ENCODE measurements at regions of chr12 and their contacts with region 1.

Region 1: DNA sequence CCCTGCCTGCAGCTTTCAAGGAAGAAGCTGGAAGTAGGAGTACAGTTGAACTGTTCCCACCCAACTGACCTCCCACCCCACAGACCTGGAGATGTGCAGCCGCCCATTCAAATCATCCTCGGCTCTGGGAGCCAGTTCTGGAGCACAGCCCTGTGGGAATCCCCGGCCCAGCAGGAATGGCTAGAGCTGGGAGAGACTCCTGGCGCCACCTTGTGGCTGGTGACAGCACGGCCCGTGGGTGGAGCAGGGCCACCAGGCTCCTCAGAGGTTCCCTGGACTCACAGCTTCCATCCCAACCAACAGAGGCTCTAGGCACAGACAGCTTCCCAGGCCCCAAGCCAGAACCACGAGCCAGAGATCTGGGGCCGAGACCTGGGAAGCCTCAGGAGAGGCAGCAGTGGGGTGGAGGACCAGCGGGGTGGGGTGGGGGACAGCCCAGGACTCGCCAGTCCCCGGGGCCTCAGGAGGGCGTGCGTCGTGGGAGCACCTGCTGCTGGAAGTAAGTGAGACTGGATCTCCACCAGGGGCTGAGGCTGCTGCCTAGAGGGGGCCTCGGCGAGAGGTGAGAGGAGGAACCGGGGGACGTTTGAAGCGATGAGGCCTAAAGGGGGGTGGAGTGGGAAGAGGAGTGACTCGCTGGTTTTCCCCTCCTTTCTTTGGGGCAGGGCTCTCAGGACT is 43.4 kb downstream of the RNF34 start:
- DNase-seq: peak; percentile 94
- ATAC-seq: peak; percentile 91
- H3K4me3 Mint-ChIP-seq: no peak overlapping the region
- H3K27ac Mint-ChIP-seq: peak overlapping the region; percentile 85
- H3K4me1 Mint-ChIP-seq: peaks cover 7% of the 10 kb centered on the region
- H3K27me3 Mint-ChIP-seq: no peaks in the 10 kb centered on the region; the same call in 1 of the 2 replicates
- CTCF ChIP-seq: peak; percentile 83

Region 2: GRCh38 chr12:121423682-121424623 is 19.4 kb before region 1 on chr12:
- CTCF ChIA-PET with region 1: interaction called, 22 read pairs
- POLR2A ChIA-PET with region 1: no interaction called
- DNase-seq: no peak
- ATAC-seq: no peak
- H3K4me3 Mint-ChIP-seq: no peak overlapping the region
- H3K27ac Mint-ChIP-seq: no peak overlapping the region; the same call in 1 of the 2 replicates
- H3K4me1 Mint-ChIP-seq: no peaks in the 10 kb centered on the region
- H3K27me3 Mint-ChIP-seq: no peaks in the 10 kb centered on the region
- CTCF ChIP-seq: no peak

Region 3: DNA sequence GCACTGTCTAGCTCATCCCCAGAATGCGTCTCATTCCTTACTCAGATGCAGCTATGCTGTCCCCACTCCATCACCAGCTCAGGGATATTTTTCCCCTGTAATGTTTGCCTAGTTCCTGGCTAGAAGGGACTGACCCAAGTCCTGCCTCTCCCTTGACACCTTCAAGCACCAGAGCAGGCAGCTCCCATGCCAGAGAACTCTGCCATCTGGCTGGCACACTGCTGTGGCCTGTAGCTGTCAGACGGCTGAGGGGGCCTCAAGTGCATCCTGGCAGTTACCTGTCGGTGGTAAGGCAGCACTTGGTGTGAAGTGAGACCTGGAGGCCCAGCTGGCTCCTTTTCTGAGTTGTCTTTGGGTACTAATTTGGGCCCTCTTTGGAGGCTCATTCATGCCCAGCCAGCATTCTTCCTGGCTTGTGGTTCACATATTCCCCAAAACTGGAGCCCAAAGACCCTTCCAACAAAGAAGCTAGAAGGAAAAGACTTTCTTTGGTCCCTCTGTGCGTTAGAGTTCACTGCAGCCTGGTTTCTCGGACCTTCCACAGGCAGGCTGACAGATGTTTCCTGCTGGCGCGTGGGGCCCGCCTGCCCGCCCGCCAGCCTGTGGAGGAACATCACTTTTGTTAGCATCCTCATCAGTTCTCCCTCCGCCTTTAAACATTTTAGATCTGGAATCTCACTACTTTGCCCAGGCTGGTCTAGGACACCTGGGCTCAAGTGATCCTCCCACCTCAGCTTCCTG is 10.4 kb before region 1 on chr12:
- CTCF ChIA-PET with region 1: interaction called, 16 read pairs
- POLR2A ChIA-PET with region 1: no interaction called
- DNase-seq: no peak
- ATAC-seq: no peak
- H3K4me3 Mint-ChIP-seq: no peak overlapping the region
- H3K27ac Mint-ChIP-seq: no peak overlapping the region
- H3K4me1 Mint-ChIP-seq: no peaks in the 10 kb centered on the region
- H3K27me3 Mint-ChIP-seq: no peaks in the 10 kb centered on the region
- CTCF ChIP-seq: no peak

Region 4: DNA sequence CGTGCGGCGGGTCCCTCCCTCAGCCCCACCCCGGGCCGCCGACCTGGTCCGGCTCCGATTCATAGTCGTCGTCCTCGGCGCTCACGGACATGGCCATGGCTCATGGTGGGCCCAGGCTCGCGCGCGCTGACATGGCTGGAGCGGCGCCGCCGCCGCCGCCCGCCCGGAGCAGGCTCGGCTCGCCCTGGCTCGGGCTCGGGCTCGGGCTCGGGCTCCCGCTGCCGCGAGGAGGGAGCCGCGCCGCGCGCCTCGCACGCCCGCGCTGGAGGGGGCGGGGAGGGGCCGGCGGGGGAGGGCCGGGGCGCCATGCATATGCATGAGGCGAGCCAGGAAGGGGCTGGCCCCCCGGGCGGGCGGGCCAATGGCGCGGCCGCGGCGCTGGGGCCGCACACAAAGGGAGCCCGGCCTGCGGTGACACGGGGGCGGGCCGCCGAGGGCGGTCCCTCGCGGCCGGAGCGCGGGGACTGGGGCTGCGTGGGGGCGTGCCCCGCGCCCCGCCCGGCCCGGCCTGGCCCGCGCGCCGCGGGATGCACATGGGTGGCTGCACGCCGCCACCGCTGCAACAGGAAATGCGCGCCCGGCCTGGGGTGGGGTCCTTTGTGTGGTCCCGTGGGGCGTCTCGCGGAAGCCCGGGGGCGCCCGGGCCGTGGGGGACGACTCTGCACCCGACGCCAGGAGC is 23.9 kb after region 1 on chr12:
- CTCF ChIA-PET with region 1: interaction called, 25 read pairs
- POLR2A ChIA-PET with region 1: no interaction called
- DNase-seq: peak; percentile 89
- ATAC-seq: peak; percentile 83
- H3K4me3 Mint-ChIP-seq: peak overlapping the region; percentile 56
- H3K27ac Mint-ChIP-seq: no peak overlapping the region
- H3K4me1 Mint-ChIP-seq: peaks cover 36% of the 10 kb centered on the region
- H3K27me3 Mint-ChIP-seq: no peaks in the 10 kb centered on the region
- CTCF ChIP-seq: no peak

Region 5: DNA sequence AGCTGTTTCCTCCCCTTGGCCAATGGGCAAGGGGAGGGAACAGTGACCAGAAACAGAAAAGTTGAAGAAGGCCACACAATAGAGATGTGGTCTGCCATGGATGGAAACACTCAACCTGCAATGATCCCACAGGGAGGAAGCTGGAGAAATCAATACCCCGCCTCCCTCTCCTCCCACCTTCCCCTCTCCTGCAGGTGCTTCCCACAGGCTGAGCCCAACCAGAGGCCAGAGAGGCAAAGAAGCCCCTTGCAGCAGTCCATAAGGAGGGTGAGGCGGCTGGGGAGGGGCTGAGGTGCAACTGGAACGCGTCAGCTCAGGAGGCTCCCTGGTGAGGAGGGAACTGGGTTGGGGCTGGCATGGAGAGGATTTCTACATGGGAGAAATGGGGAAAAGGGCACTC is 40.6 kb after region 1 on chr12:
- CTCF ChIA-PET with region 1: interaction called, 21 read pairs
- POLR2A ChIA-PET with region 1: interaction called, 3 read pairs
- DNase-seq: peak; percentile 17
- ATAC-seq: peak; percentile 38; the same call in 1 of the 2 replicates
- H3K4me3 Mint-ChIP-seq: no peak overlapping the region
- H3K27ac Mint-ChIP-seq: peak overlapping the region; percentile 44
- H3K4me1 Mint-ChIP-seq: peaks cover 8% of the 10 kb centered on the region
- H3K27me3 Mint-ChIP-seq: no peaks in the 10 kb centered on the region
- CTCF ChIP-seq: no peak

Region 6: DNA sequence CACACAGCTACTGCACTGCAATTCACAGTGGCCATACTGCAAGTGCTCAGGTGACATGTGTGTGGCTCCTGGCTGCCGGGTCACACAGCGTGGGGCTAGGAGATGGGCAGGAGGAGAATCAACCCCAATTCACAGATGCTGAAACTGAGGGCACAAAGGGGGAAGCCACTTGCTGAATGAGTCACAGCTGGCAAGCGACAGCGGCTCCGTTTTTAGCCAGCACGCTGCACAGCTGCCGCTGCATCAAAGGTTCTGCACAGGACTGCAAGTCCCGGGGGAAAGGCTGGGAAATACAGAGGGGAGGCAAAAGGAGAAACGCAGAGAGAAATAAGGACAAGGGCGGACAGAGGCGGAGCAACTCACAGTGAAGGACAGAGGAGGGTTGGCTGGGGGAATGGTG is 79.6 kb after region 1 on chr12:
- CTCF ChIA-PET with region 1: no interaction called
- POLR2A ChIA-PET with region 1: no interaction called
- DNase-seq: no peak
- ATAC-seq: no peak
- H3K4me3 Mint-ChIP-seq: no peak overlapping the region
- H3K27ac Mint-ChIP-seq: no peak overlapping the region
- H3K4me1 Mint-ChIP-seq: peaks cover 14% of the 10 kb centered on the region
- H3K27me3 Mint-ChIP-seq: no peaks in the 10 kb centered on the region
- CTCF ChIP-seq: no peak

Region 7: DNA sequence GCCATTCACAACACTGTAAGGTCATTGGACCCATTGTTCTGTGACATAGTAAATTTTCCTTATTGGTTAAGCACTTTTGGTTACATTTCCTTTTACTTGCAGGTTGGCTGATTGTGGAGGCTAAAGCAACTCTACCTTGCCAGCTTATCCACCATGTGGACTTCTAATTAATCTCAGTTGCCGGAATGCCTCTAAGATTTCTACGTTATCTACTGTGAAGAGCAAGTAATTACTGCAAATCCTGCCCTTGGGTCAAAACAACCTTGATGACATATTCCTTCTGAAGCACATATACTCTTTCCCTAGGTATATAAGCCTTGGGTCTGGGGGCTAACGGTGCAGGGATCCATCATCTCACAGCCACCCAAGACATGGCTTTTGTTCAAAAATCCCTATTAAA is 245.6 kb after region 1 on chr12:
- CTCF ChIA-PET with region 1: interaction called, 12 read pairs
- POLR2A ChIA-PET with region 1: no interaction called
- DNase-seq: no peak
- ATAC-seq: no peak
- H3K4me3 Mint-ChIP-seq: no peak overlapping the region
- H3K27ac Mint-ChIP-seq: no peak overlapping the region; the same call in 1 of the 2 replicates
- H3K4me1 Mint-ChIP-seq: peaks cover 5% of the 10 kb centered on the region; the same call in 1 of the 2 replicates
- H3K27me3 Mint-ChIP-seq: no peaks in the 10 kb centered on the region
- CTCF ChIP-seq: no peak

Region 8: GRCh38 chr12:121712461-121713256 is 269.3 kb after region 1 on chr12 and contains the start of gene TMEM120B:
- CTCF ChIA-PET with region 1: interaction called, 11 read pairs
- POLR2A ChIA-PET with region 1: no interaction called
- DNase-seq: peak; percentile 71
- ATAC-seq: peak; percentile 85
- H3K4me3 Mint-ChIP-seq: peak within 1 kb of the TSS; percentile 90
- H3K27ac Mint-ChIP-seq: peak within 1 kb of the TSS; percentile 96
- H3K4me1 Mint-ChIP-seq: peaks cover 36% of the 10 kb centered on the region
- H3K27me3 Mint-ChIP-seq: no peaks in the 10 kb centered on the region
- CTCF ChIP-seq: no peak
- total RNA-seq, gene TMEM120B: 30.7 to 36.9 TPM (median 33.6 TPM) in 3 replicates